Activated naive CD4-positive, alpha-beta T cell treated with anti-CD3 and anti-CD28 coated beads for 36 hours (primary cell): ENCODE measurements at regions of chr15 and their contacts with region 1.

Region 1: DNA sequence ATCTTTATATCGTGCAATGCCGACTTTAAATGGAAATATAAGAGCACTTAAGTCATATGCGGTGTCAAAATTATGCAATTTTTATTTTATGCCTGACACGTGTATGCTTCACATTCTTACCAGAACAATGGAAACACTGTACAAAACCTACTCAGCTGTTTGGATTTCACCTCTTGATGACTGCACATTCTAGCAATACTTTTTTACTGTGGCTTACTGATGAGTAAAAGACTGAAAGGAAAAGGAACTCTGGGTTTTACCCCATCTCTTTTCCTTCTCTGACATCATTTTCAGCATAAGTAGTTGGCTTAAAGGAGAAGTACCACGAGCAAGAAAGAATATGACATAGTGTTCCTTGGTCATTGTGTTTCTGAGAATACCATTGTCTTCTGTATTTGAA is 142.8 kb downstream of the POLR2M start:
- DNase-seq: no peak
- H3K4me3 Mint-ChIP-seq: no peak overlapping the region
- H3K27ac Mint-ChIP-seq: no peak overlapping the region
- H3K4me1 Mint-ChIP-seq: peaks cover 15% of the 10 kb centered on the region
- H3K27me3 Mint-ChIP-seq: peaks cover 12% of the 10 kb centered on the region

Region 2: DNA sequence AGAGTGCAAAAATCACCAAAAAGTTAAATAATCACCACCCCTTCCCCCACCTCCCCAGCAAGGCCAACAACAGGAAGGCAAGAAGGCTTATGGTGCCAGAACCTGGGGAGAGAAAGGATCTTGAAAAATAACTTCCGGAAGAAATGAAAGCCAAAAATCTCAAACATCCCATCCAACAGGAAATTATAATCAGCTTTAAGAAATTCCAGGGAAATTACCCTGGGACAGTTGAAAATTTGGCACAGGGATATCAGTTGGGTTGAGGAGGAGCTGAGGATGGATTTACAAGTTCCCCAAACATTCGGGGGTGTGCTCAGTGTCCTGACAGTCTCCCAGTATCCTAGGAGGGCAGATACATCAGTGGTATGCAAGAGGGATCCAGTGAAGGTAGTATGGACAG is 60.1 kb before region 1 on chr15:
- CTCF ChIA-PET with region 1: no interaction called
- intact Hi-C with region 1: loop called (anchors 5 kb)
- DNase-seq: no peak
- H3K4me3 Mint-ChIP-seq: no peak overlapping the region
- H3K27ac Mint-ChIP-seq: no peak overlapping the region
- H3K4me1 Mint-ChIP-seq: peaks cover 4% of the 10 kb centered on the region
- H3K27me3 Mint-ChIP-seq: peaks cover 12% of the 10 kb centered on the region